HCT116 (cell line): ENCODE measurements at regions of chr12 and their contacts with region 1.

Region 1: DNA sequence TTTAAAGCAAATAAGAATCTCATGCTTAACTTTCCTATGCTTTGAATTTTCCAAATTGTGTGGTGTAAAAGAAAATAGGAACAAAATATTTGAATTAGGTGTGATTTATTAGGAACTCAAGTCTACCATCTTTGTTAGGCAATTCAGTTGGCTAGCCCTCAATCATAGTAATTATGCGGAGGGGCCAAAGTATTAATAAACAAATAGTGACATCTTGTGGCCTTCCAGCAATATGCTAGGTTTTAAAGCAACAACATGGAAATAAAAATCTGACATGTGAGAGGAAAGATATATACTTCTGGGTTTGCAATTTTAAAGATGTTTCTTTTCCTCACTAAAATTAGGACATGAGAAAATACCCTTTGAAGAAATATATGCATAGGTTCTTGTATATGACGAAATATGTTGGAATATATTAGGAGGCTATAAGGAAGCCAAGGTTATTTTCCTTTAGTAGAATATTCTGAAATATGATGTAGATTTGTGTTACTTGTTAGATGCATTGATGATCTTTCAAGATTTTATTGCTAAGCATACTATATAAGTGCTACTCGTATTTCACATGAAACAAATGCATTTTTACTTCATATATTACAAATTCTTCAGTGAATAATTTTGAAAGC is 200.4 kb downstream of the PTPRO start:
- DNase-seq: peak; percentile 36
- ATAC-seq: peak; percentile 54
- H3K4me3 ChIP-seq: no peak overlapping the region
- H3K27ac ChIP-seq: no peak overlapping the region
- H3K4me1 ChIP-seq: no peaks in the 10 kb centered on the region
- H3K27me3 ChIP-seq: peaks cover 7% of the 10 kb centered on the region; the same call in 1 of the 2 replicates
- CTCF ChIP-seq: peak; percentile 54 to 73 (median 71)
- POLR2A ChIP-seq: no peak
- RAD21 ChIP-seq: peak; percentile 84

Region 2: GRCh38 chr12:14723763-14724162 is 798.9 kb before region 1 on chr12:
- CTCF ChIA-PET with region 1: no interaction called
- POLR2A ChIA-PET with region 1: no interaction called
- RAD21 ChIA-PET with region 1: no interaction called
- intact Hi-C with region 1: loop called (anchors 10 kb)
- DNase-seq: peak; percentile 28
- ATAC-seq: peak; percentile 79
- H3K4me3 ChIP-seq: no peak overlapping the region
- H3K27ac ChIP-seq: no peak overlapping the region
- H3K4me1 ChIP-seq: no peaks in the 10 kb centered on the region
- H3K27me3 ChIP-seq: no peaks in the 10 kb centered on the region
- CTCF ChIP-seq: peak in 2 of 3 experiments; percentile 75 to 76; a peak in 4 of 6 replicates
- POLR2A ChIP-seq: no peak
- RAD21 ChIP-seq: peak; percentile 66

Region 3: DNA sequence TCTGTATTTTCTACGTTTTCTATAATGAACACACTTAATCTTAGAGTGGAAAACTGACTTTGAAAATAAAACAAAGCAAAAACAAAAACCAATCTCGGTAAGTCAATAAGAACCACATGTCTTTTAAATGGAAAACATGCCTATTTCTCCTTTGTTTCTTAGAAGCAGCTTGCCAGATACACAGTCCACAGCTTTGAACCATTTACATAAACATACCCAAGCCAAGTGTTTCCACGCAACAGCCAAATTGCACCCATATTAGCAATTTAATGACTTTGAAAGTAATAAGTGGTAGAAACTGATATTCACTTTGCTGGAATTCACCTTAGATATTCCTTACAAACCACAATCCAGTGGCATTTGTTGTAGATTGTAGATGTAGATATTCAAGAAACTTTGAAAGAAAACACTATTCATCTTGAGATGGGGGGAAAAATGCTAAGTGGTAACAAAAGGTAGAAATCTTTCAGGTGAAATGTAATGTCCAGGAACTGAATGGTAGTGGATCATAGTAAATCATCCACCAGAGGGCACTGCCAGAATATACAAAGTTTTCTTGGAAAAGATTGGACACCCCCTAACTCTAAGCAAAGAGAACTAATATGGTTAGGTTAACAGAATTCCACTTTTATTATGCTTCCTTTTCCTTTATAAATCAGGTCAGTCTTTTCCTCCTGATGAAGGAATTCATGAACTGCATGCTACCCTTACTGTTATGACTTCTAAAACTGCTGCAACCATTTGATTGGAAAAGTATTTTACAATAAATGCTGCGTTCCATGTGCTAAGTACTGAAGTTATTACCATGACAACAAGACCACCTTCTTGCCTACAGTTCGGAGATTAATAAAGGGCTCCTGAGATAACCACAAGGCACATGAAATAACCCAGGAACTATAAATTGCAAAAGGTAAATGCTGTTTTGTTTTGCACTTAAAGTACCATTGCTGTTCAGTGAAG is 371.2 kb before region 1 on chr12:
- CTCF ChIA-PET with region 1: interaction called, 3 read pairs
- POLR2A ChIA-PET with region 1: no interaction called
- RAD21 ChIA-PET with region 1: no interaction called
- intact Hi-C with region 1: loop called (anchors 5 kb)
- DNase-seq: peak; percentile 6
- ATAC-seq: 0 out of 2 replicates have a peak, but pooled peaks have one; percentile 46
- H3K4me3 ChIP-seq: no peak overlapping the region
- H3K27ac ChIP-seq: no peak overlapping the region
- H3K4me1 ChIP-seq: no peaks in the 10 kb centered on the region
- H3K27me3 ChIP-seq: peaks cover 69% of the 10 kb centered on the region
- CTCF ChIP-seq: peak; percentile 34 to 62 (median 46); a peak in 3 of 6 replicates
- POLR2A ChIP-seq: no peak
- RAD21 ChIP-seq: peak; percentile 51

Region 4: GRCh38 chr12:15268927-15269552 is 253.6 kb before region 1 on chr12:
- CTCF ChIA-PET with region 1: interaction called, 18 read pairs
- POLR2A ChIA-PET with region 1: no interaction called
- RAD21 ChIA-PET with region 1: no interaction called
- intact Hi-C with region 1: loop called (anchors 2 kb)
- DNase-seq: peak; percentile 62
- ATAC-seq: peak; percentile 86
- H3K4me3 ChIP-seq: no peak overlapping the region
- H3K27ac ChIP-seq: no peak overlapping the region
- H3K4me1 ChIP-seq: no peaks in the 10 kb centered on the region
- H3K27me3 ChIP-seq: no peaks in the 10 kb centered on the region
- CTCF ChIP-seq: peak; percentile 79 to 94 (median 84)
- POLR2A ChIP-seq: no peak
- RAD21 ChIP-seq: peak; percentile 86

Region 5: GRCh38 chr12:15584366-15585041 is 61.8 kb after region 1 on chr12:
- CTCF ChIA-PET with region 1: interaction called, 27 read pairs
- POLR2A ChIA-PET with region 1: no interaction called
- RAD21 ChIA-PET with region 1: no interaction called
- intact Hi-C with region 1: no loop called
- DNase-seq: peak; percentile 43
- ATAC-seq: 0 out of 2 replicates have a peak, but pooled peaks have one; percentile 62
- H3K4me3 ChIP-seq: no peak overlapping the region
- H3K27ac ChIP-seq: no peak overlapping the region
- H3K4me1 ChIP-seq: no peaks in the 10 kb centered on the region
- H3K27me3 ChIP-seq: no peaks in the 10 kb centered on the region
- CTCF ChIP-seq: peak; percentile 55 to 75 (median 61); a peak in 5 of 6 replicates
- POLR2A ChIP-seq: no peak
- RAD21 ChIP-seq: peak; percentile 67

Region 6: GRCh38 chr12:15819644-15820437 is 297.2 kb after region 1 on chr12:
- CTCF ChIA-PET with region 1: no interaction called
- POLR2A ChIA-PET with region 1: no interaction called
- RAD21 ChIA-PET with region 1: no interaction called
- intact Hi-C with region 1: no loop called
- DNase-seq: no peak
- ATAC-seq: no peak
- H3K4me3 ChIP-seq: no peak overlapping the region
- H3K27ac ChIP-seq: no peak overlapping the region
- H3K4me1 ChIP-seq: no peaks in the 10 kb centered on the region
- H3K27me3 ChIP-seq: no peaks in the 10 kb centered on the region
- CTCF ChIP-seq: no peak
- POLR2A ChIP-seq: no peak
- RAD21 ChIP-seq: no peak